Activated naive CD4-positive, alpha-beta T cell treated with anti-CD3 and anti-CD28 coated beads, Interleukin-2, amount 10 ng/mL, durations not matched to agents 7 days and 5 days (primary cell): ENCODE measurements at regions of chr10 and their contacts with region 1.

Region 1: DNA sequence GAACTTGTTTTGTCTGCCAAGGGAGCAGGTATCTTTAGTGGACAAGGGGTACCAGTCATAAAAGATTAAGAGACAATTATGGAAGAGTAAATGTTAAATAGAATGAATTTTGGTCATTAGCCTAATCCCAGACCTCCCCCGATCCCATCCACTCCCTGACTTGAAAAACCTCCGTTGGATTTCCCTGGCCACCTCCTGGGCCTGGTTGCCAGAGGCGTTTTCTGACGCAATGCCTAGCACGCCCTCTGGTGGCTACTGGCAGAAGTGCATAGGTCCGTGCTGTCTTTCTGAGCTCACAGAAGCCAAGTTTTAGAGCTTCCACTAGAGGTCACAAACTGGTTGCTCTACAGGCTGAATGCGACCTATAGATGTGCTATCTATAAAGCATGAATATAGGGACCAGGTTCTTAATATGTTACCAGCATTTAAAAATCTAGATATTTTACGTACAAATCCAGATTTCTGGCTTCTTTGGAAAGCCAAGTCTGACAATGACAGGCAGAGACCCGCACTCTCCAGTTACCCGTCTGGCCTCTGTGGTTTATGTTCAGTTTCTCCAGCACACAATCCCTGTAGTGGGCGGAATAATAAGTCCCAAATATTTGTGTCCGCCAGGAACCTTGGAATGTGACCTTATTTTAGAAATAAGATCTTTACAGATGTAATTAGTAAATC is 39.8 kb downstream of the SPOCK2 start:
- DNase-seq: peak; percentile 95
- H3K4me3 Mint-ChIP-seq: no peak overlapping the region
- H3K27ac Mint-ChIP-seq: no peak overlapping the region
- H3K4me1 Mint-ChIP-seq: peaks cover 3% of the 10 kb centered on the region
- H3K27me3 Mint-ChIP-seq: peaks cover 32% of the 10 kb centered on the region

Region 2: DNA sequence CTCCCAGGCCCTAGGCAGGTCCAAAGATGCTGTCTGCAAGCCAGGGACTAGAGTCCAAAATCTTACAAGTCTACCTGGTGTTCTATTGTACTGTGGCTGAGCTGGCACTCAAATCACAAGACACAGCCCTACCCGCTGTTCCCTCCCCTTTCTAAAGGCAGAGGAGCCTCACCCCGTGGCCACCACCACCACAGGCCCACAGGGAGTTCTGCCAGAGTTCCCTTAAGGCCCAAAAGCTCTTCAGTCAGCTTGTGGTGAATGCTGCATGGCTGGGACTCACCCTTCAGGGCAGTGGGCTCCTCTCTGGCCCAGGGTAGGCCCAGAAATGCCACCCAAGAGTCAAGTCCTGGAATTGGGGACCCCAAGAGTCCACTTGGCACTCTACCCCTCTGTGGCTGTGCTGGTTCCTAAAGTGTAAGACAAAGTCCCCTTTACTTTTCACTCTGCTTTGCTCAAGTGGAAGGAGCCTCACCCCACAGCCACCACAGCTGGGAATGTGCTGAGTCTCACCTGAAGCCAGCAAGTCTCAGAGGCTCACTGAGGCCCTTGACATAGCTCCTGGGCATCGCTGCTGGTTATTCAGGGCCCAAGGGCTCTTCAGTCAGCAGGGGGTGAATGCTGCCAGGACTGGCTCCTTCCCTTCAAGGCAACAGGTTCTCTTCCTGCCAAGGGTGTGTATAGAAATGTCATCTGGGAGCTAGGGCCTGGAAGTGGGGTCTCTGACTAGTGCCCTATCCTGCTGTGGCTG is 148.7 kb before region 1 on chr10:
- CTCF ChIA-PET with region 1: interaction called, 59 read pairs
- DNase-seq: no peak
- H3K4me3 Mint-ChIP-seq: no peak overlapping the region
- H3K27ac Mint-ChIP-seq: no peak overlapping the region
- H3K4me1 Mint-ChIP-seq: peaks cover 10% of the 10 kb centered on the region
- H3K27me3 Mint-ChIP-seq: peaks cover 15% of the 10 kb centered on the region

Region 3: GRCh38 chr10:71957546-71958275 is 90.9 kb before region 1 on chr10:
- CTCF ChIA-PET with region 1: interaction called, 11 read pairs
- DNase-seq: no peak
- H3K4me3 Mint-ChIP-seq: no peak overlapping the region
- H3K27ac Mint-ChIP-seq: no peak overlapping the region
- H3K4me1 Mint-ChIP-seq: no peaks in the 10 kb centered on the region
- H3K27me3 Mint-ChIP-seq: peaks cover 21% of the 10 kb centered on the region

Region 4: GRCh38 chr10:72069751-72070526 is 21.4 kb after region 1 on chr10:
- CTCF ChIA-PET with region 1: interaction called, 11 read pairs
- DNase-seq: peak; percentile 35
- H3K4me3 Mint-ChIP-seq: no peak overlapping the region
- H3K27ac Mint-ChIP-seq: peak overlapping the region; percentile 69
- H3K4me1 Mint-ChIP-seq: peaks cover 22% of the 10 kb centered on the region
- H3K27me3 Mint-ChIP-seq: no peaks in the 10 kb centered on the region

Region 5: GRCh38 chr10:72331601-72332422 is 283.2 kb after region 1 on chr10:
- CTCF ChIA-PET with region 1: interaction called, 99 read pairs
- DNase-seq: peak; percentile 94
- H3K4me3 Mint-ChIP-seq: peak overlapping the region; percentile 79
- H3K27ac Mint-ChIP-seq: peak overlapping the region; percentile 98
- H3K4me1 Mint-ChIP-seq: peaks cover 96% of the 10 kb centered on the region
- H3K27me3 Mint-ChIP-seq: no peaks in the 10 kb centered on the region